WTC11 (cell line): ENCODE measurements at regions of chr6 and their contacts with region 1.

Region 1: DNA sequence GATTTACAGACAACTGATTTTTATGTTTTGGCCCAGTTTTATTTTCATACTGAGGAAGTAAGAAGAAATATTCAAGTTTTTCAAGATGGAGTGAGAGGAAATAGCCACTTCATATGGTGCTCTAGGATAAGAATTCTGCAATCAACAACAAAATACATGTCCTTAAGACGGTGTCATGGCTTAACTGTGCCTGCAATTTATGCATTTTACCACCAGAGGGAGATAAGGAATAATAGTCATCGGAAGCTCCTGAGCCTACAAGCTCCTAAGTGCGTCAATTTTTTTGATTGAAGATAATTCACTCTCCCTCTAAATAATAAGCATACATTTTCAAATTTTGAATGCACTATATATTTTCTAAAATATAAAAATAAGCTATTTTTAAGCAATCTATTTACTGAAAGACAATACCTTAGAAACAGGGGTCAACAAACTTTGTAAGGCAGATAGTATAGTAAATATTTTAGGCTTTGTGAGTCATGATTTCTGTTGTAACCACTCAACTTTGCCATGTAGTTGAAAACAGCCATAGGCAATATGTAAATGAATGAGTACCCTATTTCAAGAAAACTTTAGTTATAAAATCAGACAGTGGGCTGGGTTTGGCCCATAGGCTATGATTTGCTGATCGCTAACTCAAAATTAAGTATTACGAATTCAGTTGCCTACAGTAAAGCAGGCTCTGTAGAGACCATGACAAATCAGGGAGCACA is 230.9 kb upstream of the DTNBP1 start:
- DNase-seq: no peak
- ATAC-seq: 0 out of 2 replicates have a peak, but pooled peaks have one; percentile 13
- H3K4me3 Mint-ChIP-seq: peak overlapping the region; percentile 57
- H3K27ac Mint-ChIP-seq: peak overlapping the region; percentile 80
- H3K4me1 Mint-ChIP-seq: peaks cover 53% of the 10 kb centered on the region
- H3K27me3 Mint-ChIP-seq: no peaks in the 10 kb centered on the region
- CTCF ChIP-seq: peak; percentile 77

Region 2: GRCh38 chr6:15823838-15824414 is 69.8 kb before region 1 on chr6:
- CTCF ChIA-PET with region 1: no interaction called
- POLR2A ChIA-PET with region 1: no interaction called
- DNase-seq: no peak
- ATAC-seq: no peak
- H3K4me3 Mint-ChIP-seq: no peak overlapping the region
- H3K27ac Mint-ChIP-seq: no peak overlapping the region
- H3K4me1 Mint-ChIP-seq: peaks cover 10% of the 10 kb centered on the region
- H3K27me3 Mint-ChIP-seq: peaks cover 6% of the 10 kb centered on the region
- CTCF ChIP-seq: no peak

Region 3: GRCh38 chr6:15911753-15912504 is 18.2 kb after region 1 on chr6:
- CTCF ChIA-PET with region 1: interaction called, 23 read pairs
- POLR2A ChIA-PET with region 1: interaction called, 3 read pairs
- DNase-seq: no peak
- ATAC-seq: peak; percentile 61
- H3K4me3 Mint-ChIP-seq: no peak overlapping the region
- H3K27ac Mint-ChIP-seq: peak overlapping the region; percentile 90
- H3K4me1 Mint-ChIP-seq: peaks cover 83% of the 10 kb centered on the region
- H3K27me3 Mint-ChIP-seq: no peaks in the 10 kb centered on the region
- CTCF ChIP-seq: no peak

Region 4: DNA sequence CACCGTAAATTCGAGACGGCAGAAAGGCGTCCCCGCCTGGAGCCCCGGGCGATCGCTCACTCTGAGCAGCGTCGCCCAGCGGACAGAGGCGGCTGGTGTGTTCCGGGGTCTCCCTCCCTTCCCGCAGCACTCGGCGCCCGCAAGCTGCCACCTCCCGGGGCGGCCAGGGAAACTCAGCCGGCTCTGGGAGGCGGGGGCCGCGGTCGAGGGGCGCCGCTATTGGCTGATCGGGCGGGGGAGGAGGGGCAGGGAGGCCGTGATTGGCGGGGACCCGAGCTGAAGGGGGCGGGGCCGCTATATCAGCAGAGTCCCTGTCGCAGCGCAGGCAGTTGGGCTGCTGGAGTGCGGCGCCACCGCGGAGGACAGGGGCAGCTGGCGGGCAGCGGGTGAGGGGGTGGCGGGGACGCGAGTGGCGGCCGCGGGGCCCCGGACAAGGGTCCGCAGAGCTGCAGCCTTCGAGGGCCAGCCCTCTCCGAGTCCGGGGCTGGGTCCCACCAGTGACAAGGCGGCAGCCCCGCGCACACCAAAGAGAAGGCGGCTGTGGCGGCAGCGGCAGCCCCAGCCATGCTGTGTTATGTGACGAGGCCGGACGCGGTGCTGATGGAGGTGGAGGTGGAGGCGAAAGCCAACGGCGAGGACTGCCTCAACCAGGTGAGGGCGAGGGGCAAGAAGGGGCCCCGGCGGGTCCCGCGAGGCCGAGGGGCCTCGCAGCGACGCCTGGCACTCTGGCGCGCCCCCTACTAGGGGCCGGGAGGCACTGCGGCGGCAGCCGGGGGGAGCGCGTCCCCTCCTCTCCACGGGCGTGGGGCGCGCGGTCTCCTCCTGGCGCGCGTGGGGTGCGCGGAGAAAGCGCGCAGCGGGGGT is 235.3 kb after region 1 on chr6 and contains the start of gene MYLIP:
- CTCF ChIA-PET with region 1: interaction called, 36 read pairs
- POLR2A ChIA-PET with region 1: interaction called, 34 read pairs
- DNase-seq: peak; percentile 97
- ATAC-seq: peak; percentile 89
- H3K4me3 Mint-ChIP-seq: peak within 1 kb of the TSS; percentile 96
- H3K27ac Mint-ChIP-seq: peak within 1 kb of the TSS; percentile 90
- H3K4me1 Mint-ChIP-seq: peaks cover 29% of the 10 kb centered on the region
- H3K27me3 Mint-ChIP-seq: peaks cover 8% of the 10 kb centered on the region
- CTCF ChIP-seq: peak; percentile 41
- total RNA-seq, gene MYLIP: 43.4 to 50.0 TPM (median 44.5 TPM) in 3 replicates